ENCODE measurements at regions of chr6 and their contacts with region 1.

Region 1: DNA sequence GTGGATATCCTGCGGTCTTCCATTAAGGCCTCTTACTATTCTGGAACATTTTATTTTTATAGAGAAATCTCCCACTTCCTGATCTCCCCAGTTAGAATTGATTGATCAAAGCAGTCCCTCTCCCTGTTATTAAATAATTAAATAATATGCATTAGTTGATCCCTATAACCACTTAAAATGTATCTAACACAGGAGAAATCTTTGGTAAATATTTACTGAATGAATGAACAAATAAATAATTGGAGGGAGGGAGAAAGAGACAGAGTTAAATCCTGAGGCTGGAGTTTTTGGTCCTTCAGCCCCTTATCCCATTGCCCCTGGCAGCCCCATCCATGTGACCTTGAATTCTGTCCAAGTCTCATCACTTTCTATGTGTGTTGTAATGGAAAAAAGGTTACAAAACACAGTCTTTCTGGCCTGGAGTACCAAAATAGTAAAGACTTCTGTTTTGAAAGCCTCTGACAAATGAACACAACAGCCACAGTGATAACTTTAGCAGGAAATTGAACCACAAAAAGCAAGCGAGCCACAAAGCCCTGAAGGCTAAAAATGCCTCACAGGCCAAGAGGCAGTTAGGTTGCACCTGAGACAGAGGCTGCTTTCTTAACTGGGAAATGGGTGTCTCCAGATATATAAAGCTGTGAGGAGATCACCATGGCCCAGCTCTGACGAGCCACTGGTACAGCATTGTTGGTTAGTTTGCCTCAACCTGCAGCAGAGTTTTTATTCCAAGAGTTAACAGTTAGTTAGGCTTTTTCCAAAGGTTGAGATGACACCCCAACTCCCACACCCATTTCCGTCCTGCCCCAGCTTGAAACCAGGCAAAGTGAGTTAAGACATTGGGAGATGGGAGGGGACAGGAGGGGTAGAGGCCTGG is 11.3 kb downstream of the NT5E start:
- DNase-seq: no peak
- H3K4me3 ChIP-seq: no peak overlapping the region
- CTCF ChIP-seq: no peak

Region 2: DNA sequence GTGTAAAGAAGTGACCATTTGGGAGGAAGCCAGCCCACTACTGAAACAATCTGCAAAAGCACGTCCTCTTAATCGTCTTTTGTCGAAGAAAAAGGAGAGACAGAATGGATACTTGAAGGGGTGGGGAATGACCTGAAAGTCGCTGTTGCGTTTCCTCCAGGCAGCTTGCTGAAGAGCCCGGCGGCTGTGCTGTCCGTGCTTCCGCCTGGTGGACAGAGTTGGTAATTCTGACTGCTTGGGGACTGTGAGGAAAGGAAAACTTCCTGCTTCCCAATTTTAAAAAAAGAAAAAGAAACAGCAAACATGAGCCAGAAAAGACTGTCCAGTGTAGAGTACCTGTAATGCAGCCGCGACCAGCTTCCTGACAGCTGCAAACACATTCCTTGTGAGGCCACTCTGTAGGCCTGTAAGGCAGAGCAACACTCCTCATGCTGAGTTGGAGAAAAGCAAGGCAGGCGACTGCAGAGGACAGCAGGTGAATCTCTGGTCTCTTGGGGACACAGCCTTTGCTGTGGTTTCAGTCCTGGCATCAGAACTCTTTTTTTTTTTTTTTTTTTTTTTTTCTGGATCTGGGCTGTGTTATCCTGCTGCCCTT is 445.7 kb before region 1 on chr6:
- CTCF ChIA-PET with region 1: no interaction called
- POLR2A ChIA-PET with region 1: no interaction called
- DNase-seq: no peak
- H3K4me3 ChIP-seq: no peak overlapping the region
- CTCF ChIP-seq: peak; percentile 78

Region 3: GRCh38 chr6:85404502-85405174 is 56.5 kb before region 1 on chr6:
- CTCF ChIA-PET with region 1: no interaction called
- POLR2A ChIA-PET with region 1: interaction called, 19 read pairs
- DNase-seq: peak; percentile 90
- H3K4me3 ChIP-seq: no peak overlapping the region; the same call in 1 of the 2 replicates
- CTCF ChIP-seq: no peak

Region 4: DNA sequence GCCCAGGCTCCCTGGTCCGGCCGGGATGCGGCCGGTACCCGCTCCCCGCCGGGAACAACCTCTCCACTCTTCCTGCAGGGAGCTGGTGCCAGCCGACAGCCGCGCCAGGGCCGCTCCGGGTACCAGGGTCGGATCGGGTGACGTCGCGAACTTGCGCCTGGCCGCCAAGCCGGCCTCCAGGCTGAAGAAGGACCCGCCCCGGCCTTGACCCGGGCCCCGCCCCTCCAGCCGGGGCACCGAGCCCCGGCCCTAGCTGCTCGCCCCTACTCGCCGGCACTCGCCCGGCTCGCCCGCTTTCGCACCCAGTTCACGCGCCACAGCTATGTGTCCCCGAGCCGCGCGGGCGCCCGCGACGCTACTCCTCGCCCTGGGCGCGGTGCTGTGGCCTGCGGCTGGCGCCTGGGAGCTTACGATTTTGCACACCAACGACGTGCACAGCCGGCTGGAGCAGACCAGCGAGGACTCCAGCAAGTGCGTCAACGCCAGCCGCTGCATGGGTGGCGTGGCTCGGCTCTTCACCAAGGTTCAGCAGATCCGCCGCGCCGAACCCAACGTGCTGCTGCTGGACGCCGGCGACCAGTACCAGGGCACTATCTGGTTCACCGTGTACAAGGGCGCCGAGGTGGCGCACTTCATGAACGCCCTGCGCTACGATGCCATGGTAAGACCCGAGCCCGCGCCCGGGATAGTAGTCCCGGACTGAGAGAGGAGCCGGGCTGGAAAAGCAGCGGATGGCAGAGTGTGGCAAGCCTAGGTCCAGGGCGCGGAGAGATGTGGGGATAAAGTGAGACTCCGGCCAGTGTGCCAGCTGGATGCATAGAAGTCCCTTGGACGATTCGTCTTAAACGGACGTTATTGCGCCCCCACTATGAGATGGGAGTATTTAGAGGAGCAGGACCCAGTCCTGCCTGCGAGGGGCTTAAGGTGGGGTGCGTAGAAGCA is 11.1 kb before region 1 on chr6 and contains the start of gene NT5E:
- CTCF ChIA-PET with region 1: interaction called, 9 read pairs
- POLR2A ChIA-PET with region 1: interaction called, 30 read pairs
- DNase-seq: no peak
- H3K4me3 ChIP-seq: peak within 1 kb of the TSS; percentile 78
- CTCF ChIP-seq: peak; percentile 9

Region 5: DNA sequence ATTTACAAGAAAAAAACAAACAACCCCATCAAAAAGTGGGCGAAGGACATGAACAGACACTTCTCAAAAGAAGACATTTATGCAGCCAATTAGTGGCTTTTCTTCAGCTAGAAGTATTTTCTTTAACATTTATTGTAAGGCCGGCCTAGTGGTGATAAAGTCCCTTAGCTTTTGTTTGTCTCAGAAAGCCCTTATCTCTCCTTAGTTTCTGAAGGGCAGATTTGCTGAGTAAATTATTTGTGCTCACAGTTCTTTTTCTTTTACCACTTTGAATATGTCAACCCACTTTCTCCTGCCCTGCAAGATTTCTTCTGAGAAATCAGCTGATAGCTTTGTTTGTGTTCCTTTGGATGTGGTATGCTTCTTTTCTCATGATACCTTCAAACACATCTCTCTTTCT is 525.5 kb after region 1 on chr6:
- CTCF ChIA-PET with region 1: no interaction called
- POLR2A ChIA-PET with region 1: no interaction called
- DNase-seq: no peak
- H3K4me3 ChIP-seq: no peak overlapping the region
- CTCF ChIP-seq: no peak

Measured in AG04449 (cell line).